Endothelial cell of umbilical vein (primary cell): ENCODE measurements at regions of chr3 and their contacts with region 1.

Region 1: DNA sequence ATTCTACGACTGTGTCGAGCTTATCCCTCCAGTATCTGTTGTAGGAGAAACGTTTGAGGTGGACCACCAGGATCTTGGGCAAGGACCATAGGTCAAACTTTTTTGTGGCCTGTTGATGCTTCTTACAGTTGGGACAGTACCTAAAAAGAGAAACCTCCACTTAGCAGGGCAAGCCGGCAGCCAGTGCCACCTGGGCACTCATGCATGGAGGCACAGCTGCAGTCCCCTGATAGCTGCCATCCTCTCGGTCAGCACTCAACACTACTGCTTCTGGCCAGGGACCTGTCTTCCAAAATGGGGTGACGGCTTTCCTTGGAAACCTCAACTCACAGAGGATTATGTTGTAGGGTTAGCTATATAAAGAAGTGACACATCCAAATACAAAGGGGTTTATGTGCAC is 7.0 kb upstream of the C3orf62 start:
- DNase-seq: no peak
- H3K4me3 ChIP-seq: no peak overlapping the region
- H3K27ac ChIP-seq: no peak overlapping the region
- H3K4me1 ChIP-seq: no peaks in the 10 kb centered on the region
- H3K27me3 ChIP-seq: no peaks in the 10 kb centered on the region
- CTCF ChIP-seq: no peak
- POLR2A ChIP-seq: no peak

Region 2: GRCh38 chr3:49255112-49255511 is 28.9 kb before region 1 on chr3:
- CTCF ChIA-PET with region 1: no interaction called
- POLR2A ChIA-PET with region 1: interaction called, 12 read pairs
- dilution Hi-C with region 1: no loop called
- intact Hi-C with region 1: no loop called
- DNase-seq: no peak
- H3K4me3 ChIP-seq: no peak overlapping the region
- H3K27ac ChIP-seq: no peak overlapping the region
- H3K4me1 ChIP-seq: no peaks in the 10 kb centered on the region
- H3K27me3 ChIP-seq: no peaks in the 10 kb centered on the region
- CTCF ChIP-seq: no peak
- POLR2A ChIP-seq: no peak